ENCODE measurements at regions of chr19 and their contacts with region 1.

Region 1: GRCh38 chr19:44927746-44928145 is 13.3 kb downstream of the APOC1 start:
- DNase-seq: no peak
- H3K4me3 Mint-ChIP-seq: no peak overlapping the region
- H3K27ac Mint-ChIP-seq: no peak overlapping the region
- H3K4me1 Mint-ChIP-seq: peaks cover 5% of the 10 kb centered on the region
- H3K27me3 Mint-ChIP-seq: peaks cover 17% of the 10 kb centered on the region

Region 2: GRCh38 chr19:44903602-44904425 is 23.9 kb before region 1 on chr19:
- intact Hi-C with region 1: loop called (anchors 2 kb)
- DNase-seq: peak; percentile 54
- H3K4me3 Mint-ChIP-seq: no peak overlapping the region
- H3K27ac Mint-ChIP-seq: no peak overlapping the region
- H3K4me1 Mint-ChIP-seq: peaks cover 8% of the 10 kb centered on the region
- H3K27me3 Mint-ChIP-seq: peaks cover 16% of the 10 kb centered on the region

Region 3: DNA sequence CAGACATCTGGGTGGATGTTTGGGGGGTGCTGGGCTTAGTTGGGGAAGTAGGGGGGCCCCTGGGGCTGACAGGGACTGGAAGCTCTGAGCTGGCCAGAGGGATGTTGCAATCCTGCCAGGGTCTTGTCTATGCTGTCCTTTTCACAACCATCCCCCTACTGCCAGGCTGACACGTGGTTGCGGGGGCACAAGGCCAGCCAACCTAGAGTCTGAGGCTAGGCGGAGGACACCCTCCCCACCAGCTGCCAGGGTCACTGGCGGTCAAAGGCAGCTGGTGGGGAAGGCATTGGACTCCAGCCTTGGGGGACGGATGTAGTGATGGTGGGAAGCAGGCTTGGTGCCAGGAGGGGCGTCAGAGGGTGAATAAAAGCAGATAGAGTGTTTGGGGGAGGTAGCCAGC is 14.9 kb before region 1 on chr19:
- intact Hi-C with region 1: loop called (anchors 1 kb)
- DNase-seq: no peak
- H3K4me3 Mint-ChIP-seq: peak overlapping the region; percentile 68
- H3K27ac Mint-ChIP-seq: peak overlapping the region; percentile 34
- H3K4me1 Mint-ChIP-seq: peaks cover 24% of the 10 kb centered on the region
- H3K27me3 Mint-ChIP-seq: peaks cover 23% of the 10 kb centered on the region